Upper lobe of right lung (tissue), 1 donor: ENCODE measurements at regions of chr3 and their contacts with region 1.

Region 1: GRCh38 chr3:150495563-150496168 is 50.6 kb downstream of the SERP1 start:
- DNase-seq: no peak
- ATAC-seq: peak; percentile 75
- H3K4me3 ChIP-seq: no peak overlapping the region
- H3K27ac ChIP-seq: no peak overlapping the region
- H3K4me1 ChIP-seq: no peaks in the 10 kb centered on the region
- H3K27me3 ChIP-seq: no peaks in the 10 kb centered on the region
- CTCF ChIP-seq: peak; percentile 85

Region 2: DNA sequence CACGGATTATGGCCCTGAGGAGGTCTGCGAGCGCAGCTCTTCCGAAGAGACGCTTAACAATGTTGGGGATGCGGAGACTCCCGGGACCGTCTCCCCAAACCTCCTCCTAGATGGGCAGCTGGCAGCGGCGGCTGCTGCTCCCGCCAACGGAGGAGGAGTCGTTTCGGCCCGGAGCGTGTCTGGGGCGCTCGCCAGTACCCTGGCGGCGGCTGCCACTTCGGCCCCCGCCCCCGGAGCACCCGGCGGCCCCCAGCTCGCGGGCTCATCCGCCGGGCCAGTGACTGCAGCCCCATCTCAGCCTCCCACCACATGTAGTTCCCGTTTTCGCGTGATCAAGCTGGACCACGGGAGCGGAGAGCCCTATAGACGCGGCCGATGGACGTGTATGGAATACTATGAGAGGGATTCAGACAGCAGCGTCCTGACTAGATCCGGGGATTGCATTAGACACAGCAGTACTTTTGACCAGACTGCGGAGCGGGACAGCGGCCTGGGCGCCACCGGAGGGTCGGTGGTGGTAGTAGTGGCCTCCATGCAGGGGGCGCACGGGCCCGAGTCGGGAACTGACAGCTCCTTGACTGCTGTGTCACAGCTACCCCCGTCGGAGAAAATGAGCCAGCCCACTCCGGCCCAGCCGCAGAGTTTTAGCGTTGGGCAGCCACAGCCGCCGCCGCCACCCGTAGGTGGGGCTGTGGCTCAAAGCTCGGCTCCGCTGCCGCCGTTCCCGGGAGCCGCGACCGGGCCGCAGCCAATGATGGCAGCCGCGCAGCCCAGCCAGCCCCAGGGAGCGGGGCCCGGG is 86.0 kb before region 1 on chr3:
- intact Hi-C with region 1: loop called (anchors 10 kb)
- DNase-seq: peak; percentile 90
- ATAC-seq: peak; percentile 64
- H3K4me3 ChIP-seq: peak overlapping the region; percentile 88
- H3K27ac ChIP-seq: peak overlapping the region; percentile 99
- H3K4me1 ChIP-seq: peaks cover 11% of the 10 kb centered on the region
- H3K27me3 ChIP-seq: no peaks in the 10 kb centered on the region
- CTCF ChIP-seq: peak; percentile 63